Esophagus squamous epithelium (tissue), 5 donors: ENCODE measurements at regions of chr6 and their contacts with region 1.

Region 1: GRCh38 chr6:127641905-127642304 is 64.9 kb downstream of the C6orf58 start:
- DNase-seq: no peak
- H3K4me3 ChIP-seq: no peak overlapping the region
- H3K27ac ChIP-seq: no peak overlapping the region
- H3K4me1 ChIP-seq: no peaks in the 10 kb centered on the region
- H3K27me3 ChIP-seq: peaks cover 0 to 10% (median 0%) of the 10 kb centered on the region in 4 donors
- CTCF ChIP-seq: peak in 5 of 6 experiments; percentile 40 to 62 (median 45)
- POLR2A ChIP-seq: no peak

Region 2: GRCh38 chr6:127554435-127555006 is 87.4 kb before region 1 on chr6:
- intact Hi-C with region 1: loop called (anchors 5 kb)
- DNase-seq: no peak
- H3K4me3 ChIP-seq: no peak overlapping the region
- H3K27ac ChIP-seq: no peak overlapping the region
- H3K4me1 ChIP-seq: no peaks in the 10 kb centered on the region
- H3K27me3 ChIP-seq: no peaks in the 10 kb centered on the region
- CTCF ChIP-seq: peak in 4 of 6 experiments; percentile 19 to 54 (median 32)
- POLR2A ChIP-seq: no peak